Activated naive CD4-positive, alpha-beta T cell treated with anti-CD3 and anti-CD28 coated beads for 36 hours (primary cell): ENCODE measurements at regions of chr20 and their contacts with region 1.

Region 1: GRCh38 chr20:43691928-43692524 is 25.1 kb downstream of the MYBL2 start:
- DNase-seq: peak; percentile 76
- H3K4me3 Mint-ChIP-seq: no peak overlapping the region
- H3K27ac Mint-ChIP-seq: no peak overlapping the region
- H3K4me1 Mint-ChIP-seq: peaks cover 15% of the 10 kb centered on the region
- H3K27me3 Mint-ChIP-seq: no peaks in the 10 kb centered on the region

Region 2: GRCh38 chr20:43448748-43449535 is 243.1 kb before region 1 on chr20:
- CTCF ChIA-PET with region 1: interaction called, 6 read pairs
- intact Hi-C with region 1: loop called (anchors 1 kb)
- DNase-seq: peak; percentile 66
- H3K4me3 Mint-ChIP-seq: no peak overlapping the region
- H3K27ac Mint-ChIP-seq: no peak overlapping the region
- H3K4me1 Mint-ChIP-seq: no peaks in the 10 kb centered on the region
- H3K27me3 Mint-ChIP-seq: peaks cover 17% of the 10 kb centered on the region

Region 3: DNA sequence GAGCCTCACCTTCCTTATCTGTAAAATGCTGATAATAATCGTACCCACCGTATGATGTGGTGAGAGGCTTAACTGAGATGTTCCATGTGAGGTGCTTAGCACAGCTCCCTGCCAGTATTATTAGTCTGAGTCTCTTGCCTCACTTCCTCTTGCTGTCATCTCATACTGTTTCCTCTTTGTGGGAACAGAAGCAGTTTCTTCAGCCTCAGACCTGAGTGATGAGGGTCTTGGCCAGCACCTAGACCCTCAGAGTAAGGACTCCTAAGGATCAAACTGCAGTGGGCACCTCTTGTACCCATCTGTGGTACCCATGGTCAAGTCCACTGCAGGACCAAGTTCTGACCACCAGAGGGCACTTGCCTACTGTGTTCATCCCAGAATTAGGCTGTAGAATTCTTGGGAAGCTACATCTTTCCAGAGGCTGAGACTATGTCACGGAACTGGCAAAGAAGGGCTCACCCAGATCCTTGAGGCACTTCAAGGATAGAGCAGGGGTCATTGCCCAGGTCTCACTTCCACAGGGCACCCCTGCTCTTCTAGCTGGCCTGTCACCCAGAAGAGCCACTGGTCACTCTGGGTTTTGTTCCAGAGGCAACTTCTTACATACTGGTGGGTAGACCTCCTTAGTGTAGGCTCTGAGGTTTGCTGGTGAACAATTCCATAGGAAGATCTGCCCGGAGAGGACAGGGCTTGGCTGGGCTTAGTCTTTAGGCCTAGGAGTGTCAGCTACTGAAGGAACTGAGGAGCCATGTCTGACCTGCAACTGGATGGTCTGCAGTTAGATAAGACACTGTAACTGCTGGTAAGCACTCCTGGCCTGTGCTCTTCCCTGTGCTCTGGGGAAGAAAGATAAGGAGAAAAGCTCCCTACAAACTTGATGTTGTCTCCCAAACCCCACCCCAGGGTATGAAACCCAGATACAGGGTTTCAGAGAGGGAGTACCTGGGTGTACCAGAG is 153.8 kb before region 1 on chr20:
- CTCF ChIA-PET with region 1: interaction called, 24 read pairs
- intact Hi-C with region 1: loop called (anchors 1 kb)
- DNase-seq: peak; percentile 71
- H3K4me3 Mint-ChIP-seq: no peak overlapping the region
- H3K27ac Mint-ChIP-seq: no peak overlapping the region
- H3K4me1 Mint-ChIP-seq: no peaks in the 10 kb centered on the region
- H3K27me3 Mint-ChIP-seq: no peaks in the 10 kb centered on the region

Region 4: GRCh38 chr20:43583982-43584432 is 108.0 kb before region 1 on chr20:
- CTCF ChIA-PET with region 1: no interaction called
- intact Hi-C with region 1: no loop called
- DNase-seq: no peak
- H3K4me3 Mint-ChIP-seq: no peak overlapping the region
- H3K27ac Mint-ChIP-seq: no peak overlapping the region
- H3K4me1 Mint-ChIP-seq: no peaks in the 10 kb centered on the region
- H3K27me3 Mint-ChIP-seq: no peaks in the 10 kb centered on the region

Region 5: DNA sequence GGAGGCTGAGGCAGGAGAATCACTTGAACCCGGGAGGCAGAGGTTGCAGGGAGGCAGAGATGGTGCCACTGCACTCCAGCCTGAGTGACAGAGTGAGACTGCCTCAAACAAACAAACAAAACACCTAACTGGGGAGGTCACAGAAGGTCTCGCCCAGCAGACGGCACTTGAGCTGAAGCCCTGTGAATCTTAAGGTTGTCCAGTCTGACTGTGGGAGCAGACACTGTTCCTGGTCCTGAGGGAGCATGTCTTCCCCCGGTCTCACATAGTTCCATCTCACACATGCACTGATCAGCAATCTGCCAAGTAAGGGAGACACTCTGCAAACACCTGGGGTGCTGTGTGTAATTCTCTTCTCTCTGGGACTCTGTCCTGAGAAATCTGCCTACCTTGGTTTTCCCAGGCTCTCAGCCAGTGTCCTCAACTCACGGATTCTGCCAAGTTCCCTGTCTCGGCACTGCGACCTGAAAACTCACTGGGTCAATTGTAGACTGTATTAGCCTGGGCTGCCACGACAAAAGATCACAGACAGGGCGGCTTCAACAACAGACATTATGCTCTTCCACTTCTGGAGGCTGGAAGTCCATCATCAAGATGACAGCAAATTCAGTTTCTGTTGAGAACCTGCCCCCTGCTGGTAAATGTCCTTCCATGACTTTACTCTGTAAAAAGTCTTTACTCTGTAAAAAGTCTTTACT is 400.7 kb after region 1 on chr20:
- CTCF ChIA-PET with region 1: no interaction called
- intact Hi-C with region 1: no loop called
- DNase-seq: peak; percentile 64
- H3K4me3 Mint-ChIP-seq: no peak overlapping the region
- H3K27ac Mint-ChIP-seq: no peak overlapping the region
- H3K4me1 Mint-ChIP-seq: no peaks in the 10 kb centered on the region
- H3K27me3 Mint-ChIP-seq: peaks cover 11% of the 10 kb centered on the region